Activated T-helper 2 cell treated with anti-CD3 and anti-CD28 coated beads, Interferon-gamma antibody, Interleukin-2, Interleukin-4, amounts not matched to agents 10 μg/mL and 5 μg/mL and 100 μg/mL, durations not matched to agents 14 hours and 24 hours and 36 hours (primary cell): ENCODE measurements at regions of chr11 and their contacts with region 1.

Region 1: DNA sequence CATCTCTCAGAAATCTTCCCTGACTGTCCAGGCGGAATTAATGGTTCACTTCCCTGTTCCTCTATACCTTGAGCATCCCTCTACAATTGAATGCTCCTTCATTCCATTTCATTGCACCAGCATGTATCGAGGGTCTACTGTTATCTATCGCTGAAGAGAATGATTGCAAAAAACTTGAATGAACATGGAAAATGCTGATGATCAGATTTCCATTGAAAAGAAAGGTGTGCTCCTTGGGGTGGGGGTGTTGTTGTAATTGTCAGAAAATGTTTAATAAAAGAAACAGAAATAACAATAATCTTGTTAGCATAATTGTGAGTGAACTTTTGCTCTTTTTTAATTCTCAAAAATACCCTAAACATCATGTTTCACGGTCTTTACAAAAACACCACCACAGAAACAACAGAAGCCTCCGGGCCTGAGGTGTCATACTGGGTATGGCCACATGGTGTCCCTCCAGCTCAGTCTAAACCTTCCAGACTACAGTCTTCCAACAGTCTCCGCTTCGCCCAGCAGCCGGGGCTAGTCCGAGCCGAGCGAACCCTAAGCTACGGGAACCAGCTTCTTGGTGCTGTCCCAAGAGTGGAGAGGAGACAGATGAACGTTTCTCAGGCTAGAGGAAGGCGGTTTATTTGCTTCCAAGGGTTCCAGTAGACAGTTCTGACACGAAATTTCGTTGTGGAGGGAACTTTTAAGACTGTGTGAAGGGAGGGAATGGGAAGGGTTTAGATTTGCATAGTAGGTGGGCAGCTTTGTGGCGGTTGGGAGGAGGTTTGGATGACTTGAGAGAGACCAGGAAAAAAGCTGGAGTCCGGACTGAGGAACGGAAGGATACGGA is 75.8 kb upstream of the ZBED5 start:
- DNase-seq: peak; percentile 62
- H3K4me3 Mint-ChIP-seq: peak overlapping the region; percentile 76
- H3K27ac Mint-ChIP-seq: no peak overlapping the region
- H3K4me1 Mint-ChIP-seq: peaks cover 13% of the 10 kb centered on the region
- H3K27me3 Mint-ChIP-seq: peaks cover 50% of the 10 kb centered on the region

Region 2: DNA sequence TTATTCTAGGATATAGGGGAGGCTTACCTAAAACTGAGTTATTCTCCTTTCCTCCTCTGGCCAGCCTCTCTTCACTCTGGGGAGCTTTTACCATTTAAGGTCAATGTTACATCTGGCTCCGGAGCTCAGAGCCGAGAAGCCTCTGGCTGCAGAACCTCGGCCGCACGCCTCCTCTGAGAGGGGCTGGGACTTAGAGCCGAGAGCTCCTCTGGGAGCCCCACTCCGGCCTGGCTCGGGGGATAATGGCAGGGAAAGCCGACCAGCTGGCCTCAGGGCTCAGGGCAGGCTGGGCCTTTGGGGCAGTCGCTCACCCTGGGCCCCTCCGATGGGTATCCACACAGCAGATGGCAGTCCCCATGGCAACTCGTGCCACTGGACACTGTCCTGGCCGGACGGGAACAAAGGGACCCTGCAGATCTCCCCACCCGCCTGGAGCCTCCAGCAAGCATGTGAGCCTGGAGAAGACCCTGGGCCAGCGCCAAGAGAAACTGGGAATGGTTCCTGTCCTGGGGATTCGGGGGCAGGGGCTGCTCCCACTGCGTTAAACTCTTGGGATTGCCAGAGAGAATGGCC is 240.1 kb before region 1 on chr11 and contains the start of gene IRAG1:
- intact Hi-C with region 1: no loop called
- DNase-seq: no peak
- H3K4me3 Mint-ChIP-seq: no peak within 1 kb of the TSS
- H3K27ac Mint-ChIP-seq: no peak within 1 kb of the TSS
- H3K4me1 Mint-ChIP-seq: no peaks in the 10 kb centered on the region
- H3K27me3 Mint-ChIP-seq: peaks cover 18% of the 10 kb centered on the region
- total RNA-seq, gene IRAG1: not detected in 2 replicates

Region 3: GRCh38 chr11:10808553-10809372 is 124.9 kb before region 1 on chr11 and contains the start of gene EIF4G2:
- intact Hi-C with region 1: loop called (anchors 5 kb)
- DNase-seq: peak; percentile 98
- H3K4me3 Mint-ChIP-seq: peak within 1 kb of the TSS; percentile 94
- H3K27ac Mint-ChIP-seq: peak within 1 kb of the TSS; percentile 98
- H3K4me1 Mint-ChIP-seq: peaks cover 33% of the 10 kb centered on the region
- H3K27me3 Mint-ChIP-seq: peaks cover 2% of the 10 kb centered on the region
- total RNA-seq, gene EIF4G2: 1,057 and 1,120 TPM in 2 replicates

Region 4: DNA sequence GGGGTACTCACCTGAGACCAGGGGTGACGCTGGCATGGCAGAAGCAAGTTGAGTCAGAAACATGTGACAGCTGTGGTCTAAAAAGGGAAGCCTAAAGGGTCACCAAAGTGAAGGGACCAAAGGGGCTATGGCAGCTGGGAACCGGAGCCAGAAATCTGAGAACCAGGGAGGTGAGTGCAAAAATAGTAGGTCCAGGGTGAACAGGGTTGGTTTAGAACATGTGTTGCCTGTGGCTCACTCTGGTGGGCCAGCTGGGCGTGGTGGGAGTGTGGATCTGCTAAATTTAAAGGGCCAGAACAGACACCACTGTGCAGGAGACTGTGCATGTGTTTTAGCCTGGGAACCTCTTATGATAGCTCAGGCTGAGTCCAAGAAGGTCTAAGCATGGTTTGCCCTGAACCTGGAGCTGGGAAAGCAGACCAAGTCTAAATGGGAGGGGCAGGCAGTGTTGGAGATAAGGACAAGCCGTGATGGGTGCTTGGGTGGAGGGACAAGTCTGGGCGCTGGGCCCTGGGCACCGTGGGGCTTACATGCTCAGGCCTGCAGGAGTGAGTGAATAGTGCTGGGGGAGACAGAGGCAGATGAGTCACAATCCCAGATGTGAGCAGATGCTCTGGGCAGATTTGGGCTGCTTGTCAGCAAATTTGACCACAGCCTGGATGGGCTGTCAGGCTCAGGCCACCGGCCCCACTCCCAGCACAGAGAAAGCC is 34.4 kb before region 1 on chr11:
- intact Hi-C with region 1: no loop called
- DNase-seq: no peak
- H3K4me3 Mint-ChIP-seq: no peak overlapping the region
- H3K27ac Mint-ChIP-seq: peak overlapping the region; percentile 84
- H3K4me1 Mint-ChIP-seq: peaks cover 22% of the 10 kb centered on the region
- H3K27me3 Mint-ChIP-seq: no peaks in the 10 kb centered on the region

Region 5: GRCh38 chr11:11022125-11022730 is 88.6 kb after region 1 on chr11:
- intact Hi-C with region 1: loop called (anchors 1 kb)
- DNase-seq: no peak
- H3K4me3 Mint-ChIP-seq: no peak overlapping the region
- H3K27ac Mint-ChIP-seq: no peak overlapping the region
- H3K4me1 Mint-ChIP-seq: no peaks in the 10 kb centered on the region
- H3K27me3 Mint-ChIP-seq: peaks cover 9% of the 10 kb centered on the region

Region 6: DNA sequence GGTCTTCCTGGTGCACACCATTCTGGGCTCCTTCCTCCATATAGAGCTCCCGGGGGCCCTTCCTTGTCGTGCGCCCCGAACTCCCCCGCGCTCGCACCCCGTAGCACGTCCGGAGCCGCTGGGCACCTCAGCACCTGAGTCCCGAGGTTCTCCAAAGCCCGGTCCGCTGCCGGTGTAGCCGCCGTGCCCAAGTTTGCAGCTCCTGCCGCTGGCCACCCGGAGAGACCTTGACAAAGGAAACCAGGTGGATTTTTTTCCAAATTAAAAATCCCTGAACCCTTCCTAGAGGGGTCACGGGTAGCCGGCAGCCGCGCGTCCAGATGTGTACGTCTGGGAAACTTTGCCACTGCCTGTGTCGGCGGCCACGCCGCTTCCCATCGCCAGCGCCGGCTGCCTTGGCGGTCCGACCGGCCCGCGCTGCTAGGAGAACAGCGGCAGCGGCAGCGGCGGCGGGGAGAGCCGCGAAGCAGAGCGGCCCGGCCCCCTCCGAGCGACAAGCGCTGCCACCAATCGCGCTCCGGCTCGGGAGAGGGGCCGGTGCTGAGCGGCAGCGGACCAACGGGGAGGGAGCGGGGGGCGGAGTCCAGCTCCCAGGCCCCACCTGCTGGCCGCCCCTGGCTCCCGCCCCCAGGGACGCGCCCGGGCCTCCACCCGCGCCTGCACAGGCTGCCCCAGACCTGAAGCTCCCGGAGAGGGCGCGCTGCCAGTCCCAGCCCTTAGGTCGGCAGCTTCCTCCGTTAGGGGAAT is 688.1 kb after region 1 on chr11 and contains the start of gene GALNT18:
- intact Hi-C with region 1: loop called (anchors 5 kb)
- DNase-seq: peak; percentile 83
- H3K4me3 Mint-ChIP-seq: peak within 1 kb of the TSS; percentile 82
- H3K27ac Mint-ChIP-seq: peak within 1 kb of the TSS; percentile 59
- H3K4me1 Mint-ChIP-seq: peaks cover 8% of the 10 kb centered on the region
- H3K27me3 Mint-ChIP-seq: peaks cover 63% of the 10 kb centered on the region
- total RNA-seq, gene GALNT18: 5.0 and 5.5 TPM in 2 replicates